ENCODE measurements at regions of chr20 and their contacts with region 1.

Region 1: GRCh38 chr20:6828794-6829423 is 61.4 kb downstream of the BMP2 start:
- H3K4me3 ChIP-seq: no peak overlapping the region
- H3K27ac ChIP-seq: no peak overlapping the region
- H3K4me1 ChIP-seq: no peaks in the 10 kb centered on the region
- CTCF ChIP-seq: no peak

Region 2: DNA sequence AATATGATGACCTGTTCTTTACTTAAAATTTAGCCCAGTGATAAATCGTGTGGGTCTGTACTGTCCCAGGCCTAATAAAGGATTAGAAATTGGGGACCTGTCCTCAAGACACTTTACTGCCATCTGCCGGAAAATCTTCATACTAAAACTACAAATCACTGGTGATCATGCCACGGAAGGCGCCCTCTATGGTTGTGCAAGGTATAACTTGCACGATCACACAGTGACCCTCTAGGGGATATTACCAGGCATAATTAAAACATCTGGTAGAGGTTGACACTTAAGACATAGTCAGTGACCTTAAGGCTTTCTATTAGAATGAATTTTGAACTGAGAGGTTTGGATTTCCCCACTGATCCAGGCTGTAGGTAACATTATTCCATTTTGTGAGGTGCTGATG is 111.1 kb after region 1 on chr20:
- CTCF ChIA-PET with region 1: interaction called, 11 read pairs
- POLR2A ChIA-PET with region 1: no interaction called
- H3K4me3 ChIP-seq: no peak overlapping the region
- H3K27ac ChIP-seq: no peak overlapping the region
- H3K4me1 ChIP-seq: no peaks in the 10 kb centered on the region
- CTCF ChIP-seq: no peak

Region 3: DNA sequence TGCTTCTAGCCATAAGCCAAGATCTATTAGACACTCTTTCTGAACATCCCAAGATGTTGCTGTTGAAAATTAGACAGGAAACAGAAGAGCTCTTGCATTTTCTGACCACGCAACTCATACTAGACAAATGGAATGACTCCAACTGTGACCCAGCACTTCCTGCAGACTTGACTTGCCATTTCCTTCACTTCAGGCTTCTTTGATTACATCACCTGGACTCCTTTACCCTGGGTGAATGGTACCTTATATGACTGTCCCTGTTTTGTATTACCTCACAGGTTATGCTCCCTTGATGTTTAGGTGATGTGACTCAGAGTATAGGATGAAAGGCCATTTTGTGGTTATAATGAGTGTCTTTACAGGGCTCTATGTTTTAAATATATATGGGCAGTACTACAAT is 174.7 kb after region 1 on chr20:
- CTCF ChIA-PET with region 1: no interaction called
- POLR2A ChIA-PET with region 1: no interaction called
- H3K4me3 ChIP-seq: no peak overlapping the region
- H3K27ac ChIP-seq: no peak overlapping the region
- H3K4me1 ChIP-seq: no peaks in the 10 kb centered on the region
- CTCF ChIP-seq: no peak